ENCODE measurements at regions of chr16 and their contacts with region 1.

Region 1: DNA sequence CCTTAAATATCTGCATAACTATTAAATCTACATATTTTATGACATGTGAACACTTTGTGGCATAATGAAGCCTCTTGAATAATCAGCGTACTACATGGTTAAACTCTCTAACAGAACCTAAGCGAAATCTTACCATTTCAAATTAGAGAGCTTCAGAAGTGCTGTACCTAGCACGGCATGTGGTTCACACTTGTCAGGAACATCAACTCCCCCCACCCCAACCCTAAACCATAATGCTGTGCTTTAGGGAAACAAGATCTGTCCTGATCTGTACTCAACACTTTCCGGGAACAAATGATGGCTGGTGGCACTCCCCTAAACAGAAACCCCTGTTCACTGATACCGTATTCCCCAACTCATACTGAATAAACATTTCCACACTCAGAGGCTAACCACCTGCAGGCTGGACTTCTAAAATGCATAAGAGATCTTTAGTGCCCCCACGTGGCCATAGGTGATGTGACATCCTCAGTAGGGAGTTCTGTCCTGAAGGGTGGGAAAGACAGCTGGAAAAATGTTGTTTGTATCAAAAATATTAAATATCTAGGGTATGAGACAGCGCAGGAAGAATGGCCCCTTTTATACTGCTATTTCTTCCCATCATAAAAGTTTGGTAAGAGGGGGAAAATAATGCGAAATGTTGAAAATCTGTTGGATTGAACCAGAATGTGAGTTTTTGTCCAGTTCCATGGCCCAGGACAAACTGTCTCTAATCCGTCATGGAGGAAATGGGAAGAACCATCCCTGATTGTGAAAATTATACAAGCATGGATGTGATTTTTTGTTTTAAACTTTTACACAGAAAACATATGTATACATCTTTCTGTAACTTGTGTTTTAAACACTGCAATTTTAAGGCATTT is 88.6 kb downstream of the USP31 start:
- DNase-seq: peak; percentile 75
- ATAC-seq: peak; percentile 73
- H3K4me3 Mint-ChIP-seq: no peak overlapping the region
- H3K27ac Mint-ChIP-seq: no peak overlapping the region
- H3K4me1 Mint-ChIP-seq: peaks cover 4% of the 10 kb centered on the region
- H3K27me3 Mint-ChIP-seq: peaks cover 20% of the 10 kb centered on the region

Region 2: GRCh38 chr16:22763437-22764080 is 297.1 kb before region 1 on chr16:
- CTCF ChIA-PET with region 1: no interaction called
- POLR2A ChIA-PET with region 1: no interaction called
- intact Hi-C with region 1: no loop called
- DNase-seq: no peak
- ATAC-seq: no peak
- H3K4me3 Mint-ChIP-seq: no peak overlapping the region
- H3K27ac Mint-ChIP-seq: no peak overlapping the region
- H3K4me1 Mint-ChIP-seq: no peaks in the 10 kb centered on the region
- H3K27me3 Mint-ChIP-seq: peaks cover 6% of the 10 kb centered on the region

Region 3: GRCh38 chr16:22898874-22899348 is 161.8 kb before region 1 on chr16:
- CTCF ChIA-PET with region 1: no interaction called
- POLR2A ChIA-PET with region 1: no interaction called
- intact Hi-C with region 1: loop called in 1 of 2 experiments (anchors 1 kb)
- DNase-seq: peak; percentile 69
- ATAC-seq: no peak
- H3K4me3 Mint-ChIP-seq: no peak overlapping the region
- H3K27ac Mint-ChIP-seq: no peak overlapping the region
- H3K4me1 Mint-ChIP-seq: no peaks in the 10 kb centered on the region
- H3K27me3 Mint-ChIP-seq: peaks cover 17% of the 10 kb centered on the region